ENCODE measurements at regions of chr14 and their contacts with region 1.

Region 1: GRCh38 chr14:77376771-77377501 is at the starts of genes SAMD15 and TMED8:
- DNase-seq: peak; percentile 94
- ATAC-seq: peak; percentile 100
- total RNA-seq, gene SAMD15: not detected
- total RNA-seq, gene TMED8: 4.8 TPM

Region 2: DNA sequence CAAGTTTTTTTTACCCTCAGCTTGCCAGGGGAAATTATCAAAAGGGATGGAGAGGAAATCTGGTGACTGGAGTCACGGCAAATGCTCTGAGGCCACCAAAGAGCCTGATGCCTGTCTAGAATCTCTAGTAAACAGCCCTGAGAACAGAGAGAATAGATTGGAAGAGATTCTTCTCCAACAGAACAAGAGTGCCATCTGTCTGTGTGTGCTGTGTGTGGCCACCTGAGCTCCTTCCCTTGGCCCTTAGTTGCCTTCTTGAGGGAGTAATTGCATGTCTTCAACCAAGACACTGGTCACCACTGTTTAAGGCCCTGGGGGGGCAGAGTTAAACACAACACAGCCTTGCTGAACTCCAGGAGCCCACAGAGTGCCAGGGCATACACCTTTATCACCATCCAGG is 50.8 kb before region 1 on chr14:
- intact Hi-C with region 1: loop called (anchors 5 kb)
- DNase-seq: no peak
- ATAC-seq: no peak

Measured in Right ventricle myocardium superior (tissue), 1 donor.